HepG2 (cell line): ENCODE measurements at regions of chr17 and their contacts with region 1.

Region 1: DNA sequence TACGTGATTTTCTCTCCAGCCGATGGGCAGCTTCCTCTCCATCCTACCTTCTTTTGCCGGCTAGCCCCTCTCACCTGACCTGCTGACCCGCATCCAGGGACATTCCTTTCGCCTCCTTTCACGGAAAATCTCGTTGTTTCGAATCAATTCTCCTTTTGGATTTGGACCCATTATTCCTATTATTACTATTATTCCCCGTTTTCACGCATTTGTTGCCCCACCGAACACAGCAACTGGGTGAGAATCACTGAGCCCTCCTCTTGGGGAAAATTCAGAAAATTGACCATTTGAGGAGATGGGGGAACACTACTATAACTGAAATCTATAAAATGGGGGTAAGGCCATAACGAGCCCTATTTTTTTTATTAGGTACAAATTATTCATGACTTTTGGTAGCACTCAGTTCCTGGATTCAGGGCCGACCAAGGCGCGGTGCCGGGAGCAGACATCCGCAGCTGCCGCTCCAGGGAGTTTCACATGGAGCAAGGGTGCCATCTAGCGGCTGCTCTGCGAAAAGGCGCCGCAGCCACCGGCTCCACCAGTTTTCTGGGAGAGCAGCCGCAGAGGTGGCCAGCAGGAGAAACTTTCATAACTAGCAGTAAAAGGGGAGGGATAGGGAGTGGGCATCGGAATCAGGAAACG is 3.3 kb upstream of the HOXB8 start:
- DNase-seq: peak; percentile 67
- ATAC-seq: peak; percentile 86
- H3K4me3 ChIP-seq: no peak overlapping the region
- H3K27ac ChIP-seq: no peak overlapping the region
- H3K4me1 ChIP-seq: no peaks in the 10 kb centered on the region
- H3K27me3 ChIP-seq: peaks cover 48 to 98% of the 10 kb centered on the region in 2 experiments
- CTCF ChIP-seq: peak; percentile 94
- EP300 ChIP-seq: no peak
- POLR2A ChIP-seq: no peak
- RAD21 ChIP-seq: peak; percentile 97

Region 2: GRCh38 chr17:48259694-48260291 is 358.6 kb before region 1 on chr17:
- CTCF ChIA-PET with region 1: interaction called, 3 read pairs
- POLR2A ChIA-PET with region 1: no interaction called
- in situ Hi-C with region 1: no loop called
- intact Hi-C with region 1: loop called (anchors 5 kb)
- DNase-seq: no peak
- ATAC-seq: no peak
- H3K4me3 ChIP-seq: no peak overlapping the region
- H3K27ac ChIP-seq: no peak overlapping the region
- H3K4me1 ChIP-seq: no peaks in the 10 kb centered on the region
- H3K27me3 ChIP-seq: peaks cover 0 to 7% of the 10 kb centered on the region in 2 experiments; a peak in 1 of 5 replicates
- CTCF ChIP-seq: peak; percentile 57
- EP300 ChIP-seq: no peak
- POLR2A ChIP-seq: no peak
- RAD21 ChIP-seq: no peak

Region 3: DNA sequence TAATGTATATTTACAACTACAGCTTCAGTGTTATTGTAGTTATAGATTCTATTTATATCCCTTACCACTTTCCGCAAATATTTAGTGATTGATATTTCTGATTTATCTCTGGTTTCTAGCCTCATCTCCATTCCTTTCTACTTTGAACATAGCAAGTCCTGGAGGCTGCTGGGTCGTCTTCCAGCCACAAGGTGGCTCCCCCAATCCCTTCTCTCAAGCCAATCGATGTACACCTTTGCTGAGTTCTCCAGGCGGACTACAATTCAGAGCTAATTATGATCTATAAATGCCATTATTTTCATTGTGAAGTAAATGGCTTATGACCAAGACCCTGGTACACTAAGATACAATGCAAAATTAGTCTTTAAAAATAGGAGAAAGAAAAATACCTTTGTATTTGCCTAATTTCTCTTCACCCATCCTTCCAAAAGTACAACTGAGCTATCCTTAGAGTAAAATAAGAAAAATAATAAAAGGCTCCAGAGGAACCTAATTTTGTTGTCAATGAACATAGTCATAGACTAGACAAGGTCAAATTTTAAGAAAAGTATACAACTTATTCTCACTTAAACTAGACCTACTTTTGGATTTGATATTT is 310.5 kb before region 1 on chr17:
- CTCF ChIA-PET with region 1: interaction called, 24 read pairs
- POLR2A ChIA-PET with region 1: no interaction called
- in situ Hi-C with region 1: no loop called
- intact Hi-C with region 1: loop called (anchors 1 kb)
- DNase-seq: peak; percentile 56
- ATAC-seq: peak; percentile 88
- H3K4me3 ChIP-seq: no peak overlapping the region
- H3K27ac ChIP-seq: no peak overlapping the region
- H3K4me1 ChIP-seq: peaks cover 8% of the 10 kb centered on the region
- H3K27me3 ChIP-seq: peaks cover 0 to 8% of the 10 kb centered on the region in 2 experiments; a peak in 2 of 5 replicates
- CTCF ChIP-seq: peak; percentile 78
- EP300 ChIP-seq: no peak
- POLR2A ChIP-seq: no peak
- RAD21 ChIP-seq: peak; percentile 54; the same call in 1 of the 2 replicates

Region 4: DNA sequence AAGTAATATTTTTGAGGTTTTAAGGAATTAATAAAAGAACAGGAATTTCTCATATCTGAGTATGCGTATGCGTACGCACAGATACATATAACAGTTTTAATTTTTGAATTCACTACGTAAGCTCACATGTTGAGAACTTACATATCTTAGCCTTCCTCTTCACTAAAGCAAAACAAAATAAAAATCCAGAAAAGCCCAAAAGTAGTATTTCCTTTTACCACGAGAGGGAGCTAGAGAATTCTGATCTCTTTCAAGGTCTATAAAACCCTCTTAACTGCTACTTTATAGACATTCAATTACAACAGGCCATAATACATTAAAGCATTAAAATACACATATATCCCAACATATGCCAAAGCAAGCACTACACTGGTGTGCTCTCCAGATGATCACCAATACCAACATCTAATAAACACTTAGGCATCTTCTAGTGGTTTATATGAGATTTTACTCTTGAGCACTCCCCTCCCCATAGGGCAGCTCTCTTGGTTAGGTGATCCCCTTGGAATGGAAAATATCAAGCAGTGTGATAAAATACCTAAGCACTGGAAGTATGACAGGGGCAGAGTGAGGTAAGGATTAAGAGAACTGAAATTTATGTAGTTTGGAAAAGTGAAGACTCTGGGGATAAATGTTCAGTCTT is 282.4 kb before region 1 on chr17:
- CTCF ChIA-PET with region 1: interaction called, 10 read pairs
- POLR2A ChIA-PET with region 1: no interaction called
- in situ Hi-C with region 1: no loop called
- intact Hi-C with region 1: loop called (anchors 1 kb)
- DNase-seq: peak; percentile 42
- ATAC-seq: no peak
- H3K4me3 ChIP-seq: no peak overlapping the region
- H3K27ac ChIP-seq: no peak overlapping the region
- H3K4me1 ChIP-seq: no peaks in the 10 kb centered on the region
- H3K27me3 ChIP-seq: no peaks in the 10 kb centered on the region; a peak in 2 of 5 replicates
- CTCF ChIP-seq: peak; percentile 67
- EP300 ChIP-seq: no peak
- POLR2A ChIP-seq: no peak
- RAD21 ChIP-seq: peak; percentile 26; the same call in 1 of the 2 replicates

Region 5: DNA sequence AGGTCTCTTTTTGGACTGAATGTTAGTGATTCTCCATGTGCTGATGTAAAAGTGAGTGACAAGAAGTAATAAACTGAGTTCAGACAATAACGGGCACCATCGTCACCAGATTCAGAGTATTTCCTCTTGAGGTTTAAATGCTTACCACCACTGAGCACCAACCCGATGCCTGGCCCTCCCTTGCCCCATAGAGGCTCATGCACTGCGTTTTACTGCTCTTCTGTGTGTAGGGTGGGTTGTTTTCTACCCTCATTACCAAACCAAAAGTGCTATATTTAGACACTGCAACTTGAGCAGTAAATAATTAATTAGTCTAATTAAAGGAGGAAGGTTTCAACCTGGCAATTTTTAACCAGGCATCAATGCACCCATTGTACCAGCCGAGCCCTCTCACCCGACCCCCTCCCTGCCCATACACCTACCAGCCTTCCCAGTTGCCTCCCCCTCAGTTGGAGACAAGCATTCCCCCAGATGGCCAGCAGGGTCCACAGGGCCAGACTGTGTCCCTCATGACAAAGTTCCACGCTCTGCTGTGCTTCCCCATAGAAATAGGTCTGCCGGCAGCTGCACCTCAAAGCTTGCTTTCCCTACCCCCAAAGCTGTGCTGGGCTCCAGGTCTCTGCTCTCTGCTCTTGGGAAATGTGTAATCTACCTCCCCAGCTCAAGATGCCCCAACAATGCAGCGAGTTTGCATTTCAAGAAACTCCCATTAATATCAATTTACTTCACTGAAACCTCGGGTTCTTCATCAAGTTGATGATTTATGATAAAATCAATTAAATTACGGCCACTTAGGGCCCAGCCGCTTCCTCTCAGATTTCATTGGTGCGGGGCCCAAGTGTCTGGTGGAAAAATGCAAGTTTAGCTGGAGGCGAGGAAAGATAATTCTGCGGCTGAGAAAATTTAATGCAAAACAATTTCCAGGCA is 56.2 kb before region 1 on chr17:
- CTCF ChIA-PET with region 1: no interaction called
- POLR2A ChIA-PET with region 1: no interaction called
- in situ Hi-C with region 1: no loop called
- intact Hi-C with region 1: no loop called
- DNase-seq: no peak
- ATAC-seq: peak; percentile 78
- H3K4me3 ChIP-seq: no peak overlapping the region
- H3K27ac ChIP-seq: no peak overlapping the region
- H3K4me1 ChIP-seq: no peaks in the 10 kb centered on the region
- H3K27me3 ChIP-seq: peaks cover 29 to 94% of the 10 kb centered on the region in 2 experiments
- CTCF ChIP-seq: no peak
- EP300 ChIP-seq: no peak
- POLR2A ChIP-seq: no peak
- RAD21 ChIP-seq: no peak